H1 (cell line): ENCODE measurements at regions of chr12 and their contacts with region 1.

Region 1: DNA sequence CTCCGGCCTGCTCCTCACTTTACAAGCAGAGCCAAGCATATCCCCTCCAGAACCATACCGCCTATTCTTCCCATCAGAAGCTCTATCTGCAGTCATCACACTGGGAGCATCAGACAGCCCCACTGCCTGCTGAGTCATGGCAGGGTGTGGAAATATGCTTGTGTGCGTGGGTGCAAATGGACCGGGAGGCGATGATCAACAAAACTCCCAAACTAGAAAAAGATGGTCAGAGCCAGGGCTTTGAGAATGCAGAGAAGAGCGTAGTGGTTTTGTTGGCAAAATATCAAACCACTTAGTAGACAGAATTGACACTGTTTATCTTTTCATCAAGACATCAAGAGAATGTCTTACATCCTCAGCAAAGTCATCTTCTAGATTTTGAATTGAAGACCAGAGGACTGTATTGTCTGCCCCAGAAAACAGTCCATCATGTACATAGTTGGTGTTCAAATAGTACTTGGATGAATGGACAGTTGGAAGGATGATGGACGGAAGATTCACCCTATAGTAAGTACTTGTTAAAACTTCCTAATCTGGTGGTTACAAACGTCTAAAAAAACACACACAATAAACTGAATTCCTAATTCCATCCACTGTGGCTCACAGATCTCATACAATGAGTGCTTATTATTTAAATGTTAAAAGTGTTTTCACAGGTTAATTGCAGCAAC is 54.9 kb downstream of the VWF start:
- DNase-seq: no peak
- H3K4me3 ChIP-seq: no peak overlapping the region
- H3K27ac ChIP-seq: no peak overlapping the region
- H3K4me1 ChIP-seq: peaks cover 0 to 7% (median 3%) of the 10 kb centered on the region in 4 experiments; a peak in 4 of 7 replicates
- H3K27me3 ChIP-seq: no peaks in the 10 kb centered on the region
- CTCF ChIP-seq: no peak
- EP300 ChIP-seq: no peak
- POLR2A ChIP-seq: no peak
- RAD21 ChIP-seq: no peak

Region 2: GRCh38 chr12:6084261-6084968 is 14.8 kb after region 1 on chr12:
- CTCF ChIA-PET with region 1: interaction called, 28 read pairs
- POLR2A ChIA-PET with region 1: interaction called, 18 read pairs
- DNase-seq: peak in 1 of 2 experiments; percentile 56
- H3K4me3 ChIP-seq: peak overlapping the region in 3 of 4 experiments; percentile 8 to 27 (median 14); a peak in 3 of 8 replicates
- H3K27ac ChIP-seq: peak overlapping the region; percentile 66
- H3K4me1 ChIP-seq: peaks cover 10 to 19% (median 15%) of the 10 kb centered on the region in 4 experiments
- H3K27me3 ChIP-seq: no peaks in the 10 kb centered on the region
- CTCF ChIP-seq: no peak
- EP300 ChIP-seq: no peak
- POLR2A ChIP-seq: no peak
- RAD21 ChIP-seq: no peak; a peak in 1 of 4 replicates

Region 3: GRCh38 chr12:6143303-6143675 is 73.7 kb after region 1 on chr12:
- CTCF ChIA-PET with region 1: interaction called, 11 read pairs
- POLR2A ChIA-PET with region 1: no interaction called
- DNase-seq: no peak
- H3K4me3 ChIP-seq: no peak overlapping the region
- H3K27ac ChIP-seq: no peak overlapping the region
- H3K4me1 ChIP-seq: peaks cover 0 to 5% (median 0%) of the 10 kb centered on the region in 4 experiments; a peak in 1 of 7 replicates
- H3K27me3 ChIP-seq: no peaks in the 10 kb centered on the region
- CTCF ChIP-seq: no peak
- EP300 ChIP-seq: no peak
- POLR2A ChIP-seq: no peak
- RAD21 ChIP-seq: no peak